ENCODE measurements at regions of chr17 and their contacts with region 1.

Region 1: DNA sequence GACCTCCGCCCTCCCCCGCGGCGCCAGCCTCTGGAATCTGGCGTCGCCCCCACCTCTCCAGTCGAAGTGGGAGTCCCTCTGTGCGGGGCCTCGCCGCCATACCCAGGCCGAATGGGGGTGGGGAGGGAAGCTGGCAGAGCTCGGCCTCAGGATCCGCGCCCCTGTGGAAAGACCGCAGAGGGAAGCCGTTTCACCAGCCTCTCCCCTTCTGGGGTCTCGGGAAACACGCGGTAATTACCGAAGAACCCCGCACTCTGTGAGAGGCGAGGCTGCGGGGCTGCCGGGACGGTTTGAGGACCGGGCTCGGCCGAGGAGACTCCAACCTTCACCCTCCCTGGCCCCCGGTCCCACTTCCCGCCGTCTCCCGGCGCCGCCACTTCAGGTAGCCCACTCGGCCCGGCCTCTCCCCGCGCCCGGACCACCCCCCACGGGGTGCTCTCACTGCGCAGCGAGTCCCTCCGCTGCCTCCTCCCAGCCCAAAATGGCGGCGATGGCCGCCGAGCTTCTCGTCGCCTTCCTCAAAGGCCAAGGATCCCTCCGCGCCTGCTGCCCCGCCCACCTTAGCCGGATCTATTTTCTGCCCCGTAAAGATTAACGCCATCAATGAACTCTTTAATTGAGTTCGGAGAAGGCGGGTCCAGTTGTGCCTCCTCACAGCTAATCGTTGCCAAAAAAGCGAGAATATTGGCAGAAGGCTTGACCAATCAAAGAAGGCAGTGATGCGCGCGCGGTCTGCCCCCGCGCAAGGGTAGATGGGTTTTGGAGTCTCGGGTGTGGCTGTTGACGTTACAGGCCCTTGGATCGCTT is 453 bp upstream of the HEXIM2 start:
- DNase-seq: peak; percentile 98
- H3K4me3 Mint-ChIP-seq: peak overlapping the region; percentile 98
- H3K27ac Mint-ChIP-seq: peak overlapping the region; percentile 90
- H3K4me1 Mint-ChIP-seq: peaks cover 46% of the 10 kb centered on the region
- H3K27me3 Mint-ChIP-seq: no peaks in the 10 kb centered on the region

Region 2: GRCh38 chr17:45060797-45061605 is 100.2 kb before region 1 on chr17 and contains the start of gene NMT1:
- CTCF ChIA-PET with region 1: no interaction called
- POLR2A ChIA-PET with region 1: interaction called, 11 read pairs
- DNase-seq: peak; percentile 98
- H3K4me3 Mint-ChIP-seq: peak within 1 kb of the TSS; percentile 89
- H3K27ac Mint-ChIP-seq: peak within 1 kb of the TSS; percentile 96
- H3K4me1 Mint-ChIP-seq: peaks cover 42% of the 10 kb centered on the region
- H3K27me3 Mint-ChIP-seq: no peaks in the 10 kb centered on the region
- total RNA-seq, gene NMT1: 114 TPM

Region 3: DNA sequence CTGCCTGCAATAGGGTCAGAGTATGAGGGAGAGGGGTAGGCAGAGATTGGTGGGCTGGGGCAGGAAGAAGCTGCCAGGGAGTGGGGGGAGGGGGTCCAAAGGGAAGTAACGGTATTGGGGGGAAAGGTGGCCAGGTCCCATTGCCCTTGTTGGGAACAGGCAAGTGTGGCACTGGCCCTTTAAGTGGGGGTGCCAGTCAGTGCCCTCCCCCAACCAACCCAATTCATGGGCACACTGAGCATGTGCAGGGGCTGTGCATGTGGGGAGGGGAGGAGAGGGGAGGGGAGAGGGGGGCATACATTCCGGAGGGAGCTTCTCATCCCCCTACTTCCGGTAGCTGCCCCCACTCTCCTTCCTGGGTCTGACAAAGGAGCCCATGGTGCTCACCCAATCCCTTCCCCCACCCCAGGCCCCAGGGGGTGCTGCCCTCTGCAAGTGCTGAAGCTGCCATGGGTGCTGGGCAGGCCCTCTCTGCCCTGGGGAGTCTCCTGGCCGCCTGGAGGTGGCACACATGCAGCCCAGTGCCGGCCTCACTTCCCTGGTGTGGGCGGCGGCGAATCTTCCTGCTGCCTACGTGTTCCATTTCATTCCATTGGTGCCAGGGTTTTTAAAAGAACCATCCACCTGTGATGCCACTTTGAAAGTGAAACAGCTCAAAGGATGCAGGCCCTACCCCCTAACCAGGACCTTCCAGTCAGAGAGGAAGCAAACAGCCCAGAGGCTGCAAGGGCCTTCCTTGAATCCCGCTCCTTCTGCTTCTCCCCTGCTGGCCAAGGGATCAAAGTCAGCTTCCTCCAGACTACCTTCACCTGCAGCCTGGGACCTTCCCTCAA is 11.4 kb after region 1 on chr17:
- CTCF ChIA-PET with region 1: interaction called, 9 read pairs
- POLR2A ChIA-PET with region 1: interaction called, 54 read pairs
- DNase-seq: peak; percentile 40
- H3K4me3 Mint-ChIP-seq: peak overlapping the region; percentile 51
- H3K27ac Mint-ChIP-seq: peak overlapping the region; percentile 81
- H3K4me1 Mint-ChIP-seq: peaks cover 25% of the 10 kb centered on the region
- H3K27me3 Mint-ChIP-seq: no peaks in the 10 kb centered on the region

Region 4: DNA sequence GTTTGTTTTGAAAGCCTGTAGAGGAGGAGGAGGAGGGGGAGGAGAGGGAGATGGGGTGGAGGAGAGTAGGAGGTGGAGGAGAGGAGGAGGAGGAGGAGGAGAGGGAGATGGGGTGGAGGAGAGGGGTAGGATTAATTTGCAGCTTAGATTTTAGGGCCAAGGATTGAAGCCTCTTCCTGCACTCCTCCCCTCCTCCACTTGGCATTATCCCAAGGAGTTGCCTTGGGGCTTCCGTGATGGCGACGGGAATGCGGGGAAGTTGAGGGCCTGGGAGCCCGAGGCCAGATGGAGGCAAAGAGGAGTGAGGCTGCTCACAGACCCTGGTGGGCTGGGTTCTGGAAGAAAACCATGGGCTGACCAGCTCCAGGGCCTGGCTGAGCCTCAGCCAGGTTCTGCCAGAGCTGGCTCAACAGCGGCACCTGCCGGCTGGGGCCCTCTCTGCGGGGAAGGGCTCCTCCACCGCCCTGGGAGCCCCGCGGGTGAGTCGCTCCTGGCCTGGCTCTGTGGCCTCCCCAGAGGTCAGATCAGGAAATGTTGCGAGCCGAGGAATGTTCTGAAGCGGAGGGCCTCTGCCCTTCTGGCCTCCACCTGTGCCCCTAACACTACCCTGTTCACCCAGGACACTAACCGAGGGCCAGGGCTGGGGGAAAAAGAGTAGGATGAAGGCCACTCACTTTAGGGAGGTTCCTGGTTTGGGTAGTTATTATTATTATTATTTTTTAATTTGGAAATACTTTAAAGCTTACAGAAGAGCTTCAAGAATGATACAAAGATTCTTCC is 36.5 kb after region 1 on chr17:
- CTCF ChIA-PET with region 1: interaction called, 35 read pairs
- POLR2A ChIA-PET with region 1: interaction called, 6 read pairs
- DNase-seq: peak; percentile 86
- H3K4me3 Mint-ChIP-seq: no peak overlapping the region
- H3K27ac Mint-ChIP-seq: no peak overlapping the region
- H3K4me1 Mint-ChIP-seq: peaks cover 7% of the 10 kb centered on the region
- H3K27me3 Mint-ChIP-seq: no peaks in the 10 kb centered on the region

Region 5: DNA sequence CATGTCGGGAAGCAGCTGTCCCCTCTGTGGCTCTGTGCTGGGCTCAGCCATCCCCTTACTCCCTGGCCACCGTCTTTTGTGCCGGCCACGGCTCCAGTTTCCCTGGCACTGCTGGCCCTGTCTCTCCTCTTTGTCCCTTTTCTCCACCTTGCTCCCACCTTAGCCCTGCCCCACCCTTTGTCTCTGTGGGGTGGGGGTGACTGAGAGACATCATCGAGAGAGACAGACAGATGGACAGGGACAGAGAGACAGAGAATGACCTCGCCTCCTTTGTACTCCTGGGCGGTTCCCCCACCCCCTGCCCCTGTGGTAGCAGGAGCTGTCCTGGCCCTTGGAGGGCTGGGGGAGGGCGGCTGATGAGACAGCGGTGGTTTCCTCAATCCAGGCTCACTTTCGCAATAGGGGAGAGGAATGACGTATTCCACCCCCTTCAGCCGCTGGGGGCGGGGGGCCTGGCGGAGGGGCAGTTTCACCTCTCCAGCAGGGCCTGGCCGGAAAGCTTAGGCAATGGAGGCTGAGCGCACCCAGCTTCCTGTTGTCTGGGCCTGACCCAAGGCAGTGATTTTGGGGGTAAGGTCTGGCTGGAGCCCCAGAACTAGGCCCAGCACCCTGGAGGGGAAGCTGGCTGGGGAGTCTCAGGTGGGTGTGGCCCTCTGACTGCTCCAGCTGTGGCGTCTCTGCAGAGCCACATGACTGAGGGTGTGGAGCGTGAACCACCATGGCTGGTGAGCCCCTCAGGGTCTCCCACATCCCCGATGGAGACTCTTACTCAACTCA is 67.7 kb after region 1 on chr17:
- CTCF ChIA-PET with region 1: no interaction called
- POLR2A ChIA-PET with region 1: interaction called, 58 read pairs
- DNase-seq: peak; percentile 85
- H3K4me3 Mint-ChIP-seq: peak overlapping the region; percentile 100
- H3K27ac Mint-ChIP-seq: peak overlapping the region; percentile 99
- H3K4me1 Mint-ChIP-seq: peaks cover 88% of the 10 kb centered on the region
- H3K27me3 Mint-ChIP-seq: no peaks in the 10 kb centered on the region